ENCODE measurements at regions of chr3 and their contacts with region 1.

Region 1: DNA sequence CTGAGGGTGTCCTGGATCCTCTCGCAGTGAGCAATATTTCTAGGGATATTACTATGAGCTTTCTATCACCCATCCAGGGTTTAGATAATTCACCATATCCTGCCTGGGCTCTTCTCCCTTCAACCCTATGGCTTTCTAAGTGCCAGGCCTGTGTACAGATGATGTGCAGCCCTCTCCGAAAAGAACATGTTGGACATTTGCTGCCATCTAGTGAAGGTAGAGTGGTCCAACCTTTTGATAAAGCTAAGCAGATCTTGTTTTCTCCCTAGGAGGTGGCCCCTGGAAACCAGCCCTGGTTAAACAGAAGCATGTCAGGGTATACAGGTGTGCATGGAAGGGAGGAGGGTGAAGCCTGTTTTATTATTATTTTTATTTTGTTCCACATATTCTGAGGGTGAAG is 27.9 kb upstream of the SCN10A start:
- DNase-seq: no peak
- H3K4me3 ChIP-seq: no peak overlapping the region
- H3K27me3 ChIP-seq: peaks cover 6% of the 10 kb centered on the region
- CTCF ChIP-seq: peak; percentile 58

Region 2: GRCh38 chr3:38689774-38690173 is 154.1 kb before region 1 on chr3:
- CTCF ChIA-PET with region 1: interaction called, 17 read pairs
- POLR2A ChIA-PET with region 1: no interaction called
- DNase-seq: no peak
- H3K4me3 ChIP-seq: no peak overlapping the region
- H3K27me3 ChIP-seq: no peaks in the 10 kb centered on the region; the same call in 1 of the 2 replicates
- CTCF ChIP-seq: peak; percentile 26

Region 3: DNA sequence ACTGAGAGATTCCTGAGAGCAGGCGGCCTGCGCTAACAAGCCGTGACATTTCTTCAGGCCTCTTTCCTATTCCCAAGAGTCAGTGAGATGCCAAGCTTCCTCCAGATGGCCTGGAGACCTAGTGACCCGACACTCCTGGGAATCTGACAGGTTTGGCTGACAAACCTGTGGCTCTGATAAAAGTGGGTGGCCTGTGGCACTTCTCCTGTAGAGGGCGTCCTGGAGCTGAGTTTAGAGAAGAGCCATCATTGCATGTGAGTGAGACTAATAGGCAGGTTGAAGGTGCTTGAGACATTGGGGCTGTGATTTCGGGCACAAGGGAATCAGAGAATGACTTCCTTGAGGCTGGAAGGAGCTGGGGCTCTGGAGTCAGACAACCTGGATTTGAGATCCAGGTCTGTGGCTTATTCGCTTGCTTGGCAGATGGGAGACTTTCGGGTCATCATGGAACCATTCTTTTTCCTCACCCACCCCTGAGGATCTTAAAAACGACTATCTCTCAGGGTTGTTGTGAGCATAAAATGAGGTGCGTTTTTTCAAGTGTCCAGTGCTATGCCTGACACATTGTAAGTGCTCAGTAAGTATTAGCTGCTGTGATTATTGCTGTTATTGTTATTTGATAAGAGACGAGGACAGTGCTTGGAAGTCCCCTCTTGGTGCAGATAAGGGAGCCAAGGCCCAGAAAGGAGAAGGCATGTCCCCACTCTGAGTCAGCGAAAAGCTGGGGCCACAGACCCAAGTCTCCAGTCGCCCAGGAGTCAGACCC is 105.1 kb before region 1 on chr3:
- CTCF ChIA-PET with region 1: interaction called, 19 read pairs
- POLR2A ChIA-PET with region 1: no interaction called
- DNase-seq: no peak
- H3K4me3 ChIP-seq: no peak overlapping the region
- H3K27me3 ChIP-seq: 0 out of 2 replicates have a peak, but pooled peaks cover 1% of the 10 kb centered on the region
- CTCF ChIP-seq: peak; percentile 69

Region 4: DNA sequence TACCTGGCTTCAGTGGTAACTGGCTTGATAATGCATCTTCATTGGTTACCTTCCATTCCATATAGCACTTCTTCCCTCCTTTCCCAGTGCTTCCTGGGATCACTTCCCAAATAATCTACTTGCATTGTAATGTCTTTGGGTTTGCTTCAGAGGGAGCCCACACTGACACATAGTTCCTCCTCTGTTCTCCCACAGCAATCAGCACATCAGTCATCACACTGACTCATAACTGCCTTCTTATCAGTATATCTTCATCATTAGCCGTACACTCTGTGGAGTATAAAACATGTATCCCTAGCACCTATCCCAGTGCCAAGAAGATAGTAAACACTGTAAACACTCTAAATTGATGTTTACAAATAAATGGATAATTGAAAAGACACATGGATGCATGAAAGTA is 63.5 kb after region 1 on chr3:
- CTCF ChIA-PET with region 1: no interaction called
- POLR2A ChIA-PET with region 1: no interaction called
- DNase-seq: no peak
- H3K4me3 ChIP-seq: no peak overlapping the region
- H3K27me3 ChIP-seq: no peaks in the 10 kb centered on the region
- CTCF ChIP-seq: no peak

Measured in BJ (cell line).